Activated naive CD4-positive, alpha-beta T cell treated with anti-CD3 and anti-CD28 coated beads for 36 hours (primary cell): ENCODE measurements at regions of chr11 and their contacts with region 1.

Region 1: DNA sequence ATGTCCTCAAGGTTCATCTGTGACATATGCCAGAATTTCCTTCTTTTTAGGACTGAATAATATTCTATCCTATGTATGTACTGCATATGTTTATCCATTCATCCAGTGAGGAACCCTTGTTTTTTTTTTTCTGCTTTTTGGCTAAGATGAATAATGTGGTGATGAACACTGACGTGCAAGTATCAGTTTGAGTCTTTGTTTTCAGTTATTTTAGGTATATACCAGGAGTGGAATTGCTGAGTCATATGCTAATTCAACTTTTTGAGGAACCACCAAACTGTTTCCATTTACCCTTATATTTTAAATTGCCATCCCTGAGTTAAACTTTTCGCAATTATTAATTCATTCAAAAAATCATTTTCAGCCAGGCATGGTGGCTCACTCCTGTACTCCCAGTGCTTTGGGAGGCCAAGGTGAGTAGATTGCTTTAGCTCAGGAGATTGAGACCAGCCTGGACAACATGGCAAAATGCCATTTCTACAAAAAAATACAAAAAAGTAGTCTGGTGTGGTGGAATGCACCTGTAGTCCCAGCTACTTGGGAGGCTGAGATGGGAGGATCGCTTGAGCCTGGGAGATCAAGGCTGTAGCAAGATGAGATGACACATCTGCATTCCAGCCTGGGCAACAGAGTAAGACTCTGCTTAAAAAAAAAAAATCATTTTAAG is 64.2 kb downstream of the MICAL2 start:
- DNase-seq: no peak
- H3K4me3 Mint-ChIP-seq: peak overlapping the region; percentile 19
- H3K27ac Mint-ChIP-seq: peak overlapping the region; percentile 90
- H3K4me1 Mint-ChIP-seq: peaks cover 66% of the 10 kb centered on the region
- H3K27me3 Mint-ChIP-seq: no peaks in the 10 kb centered on the region

Region 2: GRCh38 chr11:12110201-12110713 is 64.4 kb before region 1 on chr11 and contains the start of gene MICAL2:
- CTCF ChIA-PET with region 1: no interaction called
- intact Hi-C with region 1: loop called (anchors 1 kb)
- DNase-seq: peak; percentile 83
- H3K4me3 Mint-ChIP-seq: peak within 1 kb of the TSS; percentile 83
- H3K27ac Mint-ChIP-seq: peak within 1 kb of the TSS; percentile 91
- H3K4me1 Mint-ChIP-seq: peaks cover 25% of the 10 kb centered on the region
- H3K27me3 Mint-ChIP-seq: no peaks in the 10 kb centered on the region
- total RNA-seq, gene MICAL2: 48.7 to 54.6 TPM

Region 3: DNA sequence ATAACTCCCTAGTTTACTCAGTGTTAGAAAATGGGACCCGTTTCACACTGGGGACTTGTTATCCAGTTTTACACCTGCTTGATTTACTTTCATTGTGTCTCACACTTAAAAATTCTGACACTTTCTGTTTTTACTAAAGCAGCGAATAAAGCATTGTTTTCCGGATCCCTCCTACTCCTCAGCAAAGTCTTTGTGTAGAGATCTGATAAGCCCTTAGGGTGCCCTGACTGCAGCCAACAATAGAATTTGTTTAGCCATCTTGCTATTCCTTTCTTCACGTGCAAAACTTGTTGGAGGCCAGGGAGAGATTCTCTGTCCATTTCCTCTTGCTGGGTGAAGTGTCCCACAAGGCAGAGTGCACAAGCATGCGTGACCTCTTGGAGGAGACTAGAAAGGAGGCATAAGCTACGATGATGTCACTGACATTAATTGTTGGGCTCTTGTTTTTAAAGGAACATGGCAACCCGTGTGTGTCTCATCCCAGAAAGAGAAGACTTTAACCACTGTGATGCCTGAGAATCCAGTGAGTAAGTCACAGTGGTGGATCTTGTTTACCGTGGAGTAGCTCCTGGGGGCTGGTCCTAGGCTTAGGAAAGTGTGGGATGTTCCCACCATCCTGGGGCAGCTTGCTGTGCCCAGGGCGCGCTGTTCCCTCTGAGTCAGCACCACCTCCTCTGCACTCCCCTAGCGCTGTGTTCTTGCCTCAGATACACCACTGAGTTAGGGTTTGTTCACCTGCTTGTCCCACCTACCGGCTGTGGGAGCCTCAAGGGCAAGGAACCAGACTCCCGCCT is 36.5 kb before region 1 on chr11:
- CTCF ChIA-PET with region 1: no interaction called
- intact Hi-C with region 1: loop called (anchors 1 kb)
- DNase-seq: no peak
- H3K4me3 Mint-ChIP-seq: no peak overlapping the region
- H3K27ac Mint-ChIP-seq: peak overlapping the region; percentile 32
- H3K4me1 Mint-ChIP-seq: peaks cover 54% of the 10 kb centered on the region
- H3K27me3 Mint-ChIP-seq: no peaks in the 10 kb centered on the region

Region 4: GRCh38 chr11:12159351-12160099 is 15.1 kb before region 1 on chr11:
- CTCF ChIA-PET with region 1: interaction called, 4 read pairs
- intact Hi-C with region 1: loop called (anchors 1 kb)
- DNase-seq: no peak
- H3K4me3 Mint-ChIP-seq: no peak overlapping the region
- H3K27ac Mint-ChIP-seq: no peak overlapping the region
- H3K4me1 Mint-ChIP-seq: peaks cover 42% of the 10 kb centered on the region
- H3K27me3 Mint-ChIP-seq: no peaks in the 10 kb centered on the region

Region 5: GRCh38 chr11:12195768-12196167 is 21.2 kb after region 1 on chr11:
- CTCF ChIA-PET with region 1: interaction called, 4 read pairs
- intact Hi-C with region 1: loop called (anchors 1 kb)
- DNase-seq: peak; percentile 72
- H3K4me3 Mint-ChIP-seq: peak overlapping the region; percentile 79
- H3K27ac Mint-ChIP-seq: peak overlapping the region; percentile 90
- H3K4me1 Mint-ChIP-seq: peaks cover 70% of the 10 kb centered on the region
- H3K27me3 Mint-ChIP-seq: no peaks in the 10 kb centered on the region

Region 6: GRCh38 chr11:12224537-12224893 is 49.9 kb after region 1 on chr11:
- CTCF ChIA-PET with region 1: interaction called, 3 read pairs
- intact Hi-C with region 1: loop called (anchors 1 kb)
- DNase-seq: peak; percentile 97
- H3K4me3 Mint-ChIP-seq: peak overlapping the region; percentile 64
- H3K27ac Mint-ChIP-seq: peak overlapping the region; percentile 82
- H3K4me1 Mint-ChIP-seq: peaks cover 31% of the 10 kb centered on the region
- H3K27me3 Mint-ChIP-seq: no peaks in the 10 kb centered on the region

Region 7: DNA sequence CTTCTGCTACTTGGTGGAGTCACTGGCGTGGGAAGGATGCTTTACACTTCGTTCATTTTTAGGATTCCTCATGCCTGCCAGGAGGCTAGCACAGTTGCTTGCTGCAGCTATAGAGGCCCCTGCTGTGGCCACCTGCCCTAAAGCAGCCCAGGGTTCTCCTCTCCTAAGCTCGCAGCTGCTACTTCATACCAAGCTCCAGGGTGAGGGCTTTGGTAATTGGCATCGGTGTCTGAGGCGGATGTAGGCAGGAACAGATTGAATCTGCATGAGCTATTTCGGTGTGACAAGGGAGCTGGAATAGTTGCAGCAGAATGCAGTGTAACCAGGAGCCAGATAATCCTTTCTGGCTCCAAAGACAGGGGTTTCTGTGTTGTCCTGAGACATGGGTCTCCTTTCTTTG is 68.9 kb after region 1 on chr11:
- CTCF ChIA-PET with region 1: no interaction called
- intact Hi-C with region 1: no loop called
- DNase-seq: no peak
- H3K4me3 Mint-ChIP-seq: no peak overlapping the region
- H3K27ac Mint-ChIP-seq: no peak overlapping the region
- H3K4me1 Mint-ChIP-seq: peaks cover 21% of the 10 kb centered on the region
- H3K27me3 Mint-ChIP-seq: no peaks in the 10 kb centered on the region